GM12878 (cell line): ENCODE measurements at regions of chr18 and their contacts with region 1.

Region 1: DNA sequence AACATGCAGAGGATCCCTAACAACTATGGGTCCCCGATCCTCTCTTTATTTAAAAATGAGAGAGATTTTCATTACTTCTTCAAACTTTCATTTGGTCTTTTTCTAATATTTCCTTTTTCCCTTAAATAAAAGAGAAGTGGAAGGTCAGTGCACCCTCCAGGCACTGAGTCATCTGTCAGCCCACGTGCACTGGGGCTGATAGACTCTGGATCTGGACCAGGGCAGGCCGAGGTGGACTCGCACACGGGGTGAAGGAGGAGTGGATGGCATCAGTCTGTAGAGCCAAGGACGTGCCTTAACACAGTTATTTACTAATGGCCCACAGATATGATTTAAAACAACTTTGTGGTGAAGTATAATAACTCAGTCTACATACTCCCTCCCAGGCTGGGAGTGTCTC is 214.4 kb upstream of the TMEM200C start:
- DNase-seq: no peak
- ATAC-seq: no peak
- H3K4me3 ChIP-seq: no peak overlapping the region
- H3K27ac ChIP-seq: no peak overlapping the region
- H3K4me1 ChIP-seq: no peaks in the 10 kb centered on the region
- H3K27me3 ChIP-seq: no peaks in the 10 kb centered on the region
- CTCF ChIP-seq: no peak
- EP300 ChIP-seq: no peak
- POLR2A ChIP-seq: no peak
- RAD21 ChIP-seq: no peak

Region 2: GRCh38 chr18:5868218-5869115 is 241.3 kb before region 1 on chr18:
- CTCF ChIA-PET with region 1: no interaction called
- POLR2A ChIA-PET with region 1: no interaction called
- RAD21 ChIA-PET with region 1: no interaction called
- SMC1A ChIA-PET with region 1: no interaction called
- in situ Hi-C with region 1: no loop called
- intact Hi-C with region 1: no loop called
- DNase-seq: peak; percentile 16
- ATAC-seq: peak; percentile 93
- H3K4me3 ChIP-seq: no peak overlapping the region
- H3K27ac ChIP-seq: no peak overlapping the region
- H3K4me1 ChIP-seq: no peaks in the 10 kb centered on the region
- H3K27me3 ChIP-seq: no peaks in the 10 kb centered on the region
- CTCF ChIP-seq: peak; percentile 69 to 87 (median 79)
- EP300 ChIP-seq: no peak
- POLR2A ChIP-seq: no peak
- RAD21 ChIP-seq: peak; percentile 97

Region 3: DNA sequence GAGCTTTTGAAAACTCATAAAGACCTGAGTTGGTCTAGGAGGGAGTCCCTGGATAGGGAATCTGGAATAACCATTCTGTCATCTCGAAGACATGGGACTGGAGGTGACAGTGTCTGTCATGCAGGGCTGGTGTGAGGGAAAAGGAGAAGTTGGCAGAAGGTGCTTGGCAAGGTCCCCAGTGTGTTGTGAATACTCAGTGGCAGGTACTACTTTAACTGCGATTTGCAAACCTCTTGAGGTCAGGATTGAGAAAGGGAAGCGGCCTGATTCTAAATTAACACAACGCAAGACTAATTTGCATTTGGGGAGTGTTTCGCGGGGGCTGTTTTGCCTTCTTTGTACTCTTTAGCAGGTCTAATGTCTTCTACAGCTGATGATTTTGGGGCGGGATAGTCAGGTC is 137.4 kb before region 1 on chr18:
- CTCF ChIA-PET with region 1: no interaction called
- POLR2A ChIA-PET with region 1: no interaction called
- RAD21 ChIA-PET with region 1: no interaction called
- SMC1A ChIA-PET with region 1: no interaction called
- in situ Hi-C with region 1: no loop called
- intact Hi-C with region 1: no loop called
- DNase-seq: peak; percentile 68
- ATAC-seq: peak; percentile 35
- H3K4me3 ChIP-seq: no peak overlapping the region
- H3K27ac ChIP-seq: no peak overlapping the region
- H3K4me1 ChIP-seq: peaks cover 50% of the 10 kb centered on the region
- H3K27me3 ChIP-seq: no peaks in the 10 kb centered on the region; a peak in 1 of 4 replicates
- CTCF ChIP-seq: no peak
- EP300 ChIP-seq: no peak
- POLR2A ChIP-seq: no peak
- RAD21 ChIP-seq: peak; percentile 36; the same call in 1 of the 2 replicates

Region 4: DNA sequence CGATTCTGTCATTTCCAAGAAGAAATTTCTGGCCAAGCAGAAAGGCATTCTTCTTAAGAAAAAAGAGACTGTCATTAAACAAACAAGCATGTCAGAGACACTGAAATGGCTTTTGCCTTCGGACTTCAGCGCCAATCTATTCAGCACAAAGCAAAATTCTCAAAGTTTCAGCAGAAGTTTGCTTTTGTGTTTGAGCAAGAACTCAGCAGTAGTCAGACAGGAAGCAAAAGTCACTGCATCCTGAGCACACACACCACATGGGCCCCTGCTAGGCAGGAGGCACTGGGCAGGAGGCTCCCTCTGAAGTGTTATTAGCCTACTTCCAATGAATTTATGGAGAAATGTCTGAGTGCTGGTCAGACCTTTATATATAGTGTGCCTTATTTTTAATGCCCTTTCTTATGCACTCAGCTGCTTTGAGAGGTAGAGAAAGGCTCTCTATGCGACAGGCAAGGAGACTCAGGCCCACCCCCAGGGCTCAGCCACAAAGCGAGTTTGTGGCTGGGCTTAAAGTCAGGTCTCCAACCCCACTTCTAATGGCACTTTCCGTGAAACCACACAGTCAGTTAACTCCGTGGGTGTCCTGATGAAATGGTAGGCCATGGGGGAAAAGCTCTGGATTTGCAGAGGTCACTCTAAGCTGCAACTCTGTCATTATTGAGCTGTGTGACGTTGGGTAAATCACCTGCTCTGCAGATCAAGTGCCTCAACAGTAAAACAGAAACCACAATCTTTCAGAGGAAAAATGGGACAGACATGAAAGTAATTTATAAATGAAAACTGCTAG is 53.4 kb before region 1 on chr18:
- CTCF ChIA-PET with region 1: no interaction called
- POLR2A ChIA-PET with region 1: no interaction called
- RAD21 ChIA-PET with region 1: no interaction called
- SMC1A ChIA-PET with region 1: no interaction called
- in situ Hi-C with region 1: no loop called
- intact Hi-C with region 1: loop called (anchors 5 kb)
- DNase-seq: no peak
- ATAC-seq: peak; percentile 70
- H3K4me3 ChIP-seq: no peak overlapping the region
- H3K27ac ChIP-seq: no peak overlapping the region
- H3K4me1 ChIP-seq: peaks cover 6% of the 10 kb centered on the region
- H3K27me3 ChIP-seq: no peaks in the 10 kb centered on the region
- CTCF ChIP-seq: no peak
- EP300 ChIP-seq: no peak; a peak in 1 of 4 replicates
- POLR2A ChIP-seq: no peak
- RAD21 ChIP-seq: no peak